CD8-positive, alpha-beta T cell (primary cell): ENCODE measurements at regions of chr17 and their contacts with region 1.

Region 1: GRCh38 chr17:44932496-44933097 is 15.0 kb downstream of the KIF18B start:
- DNase-seq: no peak
- ATAC-seq: no peak
- H3K4me3 ChIP-seq: no peak overlapping the region
- H3K4me3 Mint-ChIP-seq: no peak overlapping the region
- H3K27ac ChIP-seq: no peak overlapping the region
- H3K27ac Mint-ChIP-seq: no peak overlapping the region
- H3K4me1 ChIP-seq: no peaks in the 10 kb centered on the region
- H3K4me1 Mint-ChIP-seq: no peaks in the 10 kb centered on the region
- H3K27me3 ChIP-seq: no peaks in the 10 kb centered on the region
- H3K27me3 Mint-ChIP-seq: no peaks in the 10 kb centered on the region
- CTCF ChIP-seq: no peak

Region 2: DNA sequence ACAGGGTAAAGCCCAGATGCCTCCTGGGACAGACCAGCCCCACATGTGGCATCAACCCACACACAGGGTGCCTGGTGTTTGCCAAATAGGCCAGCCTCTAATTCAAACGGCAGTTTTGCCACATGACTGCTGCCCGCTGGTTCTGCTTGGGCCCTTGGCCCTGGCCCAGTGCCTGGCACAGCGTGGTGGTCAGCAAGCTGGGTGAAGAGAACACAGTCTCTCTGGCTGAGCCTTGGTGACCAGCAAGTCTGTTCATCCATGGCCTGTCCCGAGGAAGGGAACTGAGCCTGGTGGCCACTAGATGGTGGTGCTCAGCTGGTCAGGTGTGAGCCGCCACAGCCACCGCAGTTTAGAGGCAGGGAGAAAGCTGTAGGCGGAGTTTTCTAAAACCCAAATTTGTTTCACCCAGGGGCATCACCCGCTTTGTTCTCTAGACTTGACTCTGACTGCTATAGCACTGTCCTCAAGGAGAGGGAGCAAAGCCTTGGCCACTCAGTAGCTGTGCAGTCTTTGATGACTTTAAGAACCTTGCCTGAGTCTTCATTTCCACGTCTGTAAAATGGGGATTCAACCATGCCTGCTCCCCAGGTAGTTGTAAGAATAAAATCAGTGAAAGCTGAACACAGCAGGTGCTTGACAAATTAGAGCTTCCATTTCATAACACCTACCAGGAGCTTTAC is 12.6 kb before region 1 on chr17:
- CTCF ChIA-PET with region 1: interaction called, 13 read pairs
- POLR2A ChIA-PET with region 1: no interaction called
- intact Hi-C with region 1: no loop called
- DNase-seq: peak; percentile 19 to 70 (median 52)
- ATAC-seq: peak; percentile 91
- H3K4me3 ChIP-seq: no peak overlapping the region
- H3K4me3 Mint-ChIP-seq: no peak overlapping the region
- H3K27ac ChIP-seq: no peak overlapping the region
- H3K27ac Mint-ChIP-seq: no peak overlapping the region
- H3K4me1 ChIP-seq: no peaks in the 10 kb centered on the region
- H3K4me1 Mint-ChIP-seq: no peaks in the 10 kb centered on the region
- H3K27me3 ChIP-seq: peaks cover 4% of the 10 kb centered on the region in 2 experiments
- H3K27me3 Mint-ChIP-seq: peaks cover 11% of the 10 kb centered on the region
- CTCF ChIP-seq: peak; percentile 32

Region 3: DNA sequence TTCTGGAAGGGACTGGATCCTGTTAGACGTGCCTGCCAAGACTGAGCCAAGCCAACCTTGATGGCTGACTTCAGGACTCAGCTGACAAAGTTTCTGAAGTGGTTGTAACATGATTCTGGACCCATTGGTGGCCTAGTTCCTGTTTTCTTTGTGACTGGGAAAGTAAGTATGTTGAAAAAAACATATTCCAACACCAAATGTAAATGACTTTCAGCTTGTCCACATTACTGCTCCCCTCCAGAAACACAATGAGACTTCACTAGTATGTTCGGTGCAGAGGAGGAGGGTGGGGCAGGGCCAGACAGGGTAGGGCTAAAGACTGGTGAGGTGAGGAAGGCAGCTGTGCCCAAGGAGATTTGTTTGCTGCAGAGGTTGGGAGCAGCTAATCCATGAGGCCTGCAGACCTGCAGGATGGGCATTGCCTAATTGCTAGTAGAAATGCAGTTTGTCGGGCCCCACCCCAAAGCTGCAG is 154.9 kb after region 1 on chr17:
- CTCF ChIA-PET with region 1: no interaction called
- POLR2A ChIA-PET with region 1: no interaction called
- intact Hi-C with region 1: no loop called
- DNase-seq: no peak
- ATAC-seq: no peak
- H3K4me3 ChIP-seq: no peak overlapping the region
- H3K4me3 Mint-ChIP-seq: no peak overlapping the region
- H3K27ac ChIP-seq: no peak overlapping the region
- H3K27ac Mint-ChIP-seq: no peak overlapping the region
- H3K4me1 ChIP-seq: no peaks in the 10 kb centered on the region
- H3K4me1 Mint-ChIP-seq: no peaks in the 10 kb centered on the region
- H3K27me3 ChIP-seq: no peaks in the 10 kb centered on the region
- H3K27me3 Mint-ChIP-seq: no peaks in the 10 kb centered on the region
- CTCF ChIP-seq: no peak

Region 4: GRCh38 chr17:45640141-45640850 is 707.7 kb after region 1 on chr17:
- CTCF ChIA-PET with region 1: no interaction called
- POLR2A ChIA-PET with region 1: no interaction called
- intact Hi-C with region 1: no loop called
- DNase-seq: peak; percentile 46 to 83 (median 74)
- ATAC-seq: peak; percentile 68
- H3K4me3 ChIP-seq: no peak overlapping the region
- H3K4me3 Mint-ChIP-seq: no peak overlapping the region
- H3K27ac ChIP-seq: no peak overlapping the region
- H3K27ac Mint-ChIP-seq: peak overlapping the region; percentile 77
- H3K4me1 ChIP-seq: no peaks in the 10 kb centered on the region
- H3K4me1 Mint-ChIP-seq: peaks cover 6% of the 10 kb centered on the region
- H3K27me3 ChIP-seq: no peaks in the 10 kb centered on the region
- H3K27me3 Mint-ChIP-seq: no peaks in the 10 kb centered on the region
- CTCF ChIP-seq: peak; percentile 94